ENCODE measurements at regions of chr11 and their contacts with region 1.

Region 1: DNA sequence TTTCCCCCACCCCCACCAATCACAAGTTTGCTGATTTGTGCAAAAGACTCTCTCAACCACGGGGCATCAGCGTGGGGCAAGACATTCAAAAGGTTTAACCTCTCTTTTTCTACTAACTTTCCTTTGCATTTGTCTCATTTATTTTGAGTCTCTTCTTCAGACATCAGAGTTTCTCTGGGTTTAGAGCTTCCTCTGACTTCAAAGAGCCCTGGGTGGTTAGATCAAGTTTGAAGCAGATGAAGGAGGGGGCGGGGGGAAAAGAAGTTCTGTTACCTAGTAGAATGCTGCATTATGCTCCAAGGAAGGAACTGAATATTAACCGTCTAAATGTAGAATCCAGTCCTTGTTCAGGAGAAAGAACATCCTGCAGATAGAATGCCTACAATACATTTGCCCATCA is 24.5 kb downstream of the GAS2 start:
- DNase-seq: no peak
- ATAC-seq: peak; percentile 32
- H3K4me3 ChIP-seq: no peak overlapping the region
- H3K27ac ChIP-seq: no peak overlapping the region
- H3K4me1 ChIP-seq: no peaks in the 10 kb centered on the region
- H3K27me3 ChIP-seq: no peaks in the 10 kb centered on the region
- CTCF ChIP-seq: no peak
- EP300 ChIP-seq: no peak
- POLR2A ChIP-seq: no peak
- RAD21 ChIP-seq: no peak

Region 2: DNA sequence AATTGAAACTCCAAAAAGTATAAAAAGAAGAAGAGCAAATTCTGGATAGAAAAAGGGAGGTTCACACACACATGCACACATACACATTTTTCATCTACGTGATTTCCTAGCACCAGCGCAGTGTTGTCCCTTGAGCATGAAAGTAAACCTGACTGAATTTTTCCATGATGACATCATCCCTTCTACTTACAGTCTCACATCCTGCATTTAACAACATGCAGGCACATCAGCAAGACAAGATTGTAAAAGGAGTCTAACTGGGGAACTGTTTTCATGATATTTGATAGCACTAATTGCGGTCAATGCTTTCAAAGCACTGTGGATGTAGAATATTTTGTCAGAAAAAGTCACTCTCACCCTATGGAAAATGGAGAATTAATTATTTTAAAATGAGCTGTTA is 12.2 kb after region 1 on chr11:
- CTCF ChIA-PET with region 1: interaction called, 4 read pairs
- POLR2A ChIA-PET with region 1: interaction called, 43 read pairs
- RAD21 ChIA-PET with region 1: interaction called, 13 read pairs
- SMC1A ChIA-PET with region 1: interaction called, 85 read pairs
- in situ Hi-C with region 1: no loop called
- intact Hi-C with region 1: no loop called
- DNase-seq: peak; percentile 21
- ATAC-seq: peak; percentile 76
- H3K4me3 ChIP-seq: no peak overlapping the region
- H3K27ac ChIP-seq: no peak overlapping the region
- H3K4me1 ChIP-seq: no peaks in the 10 kb centered on the region
- H3K27me3 ChIP-seq: no peaks in the 10 kb centered on the region
- CTCF ChIP-seq: no peak
- EP300 ChIP-seq: peak in 1 of 2 experiments; percentile 43; a peak in 1 of 4 replicates
- POLR2A ChIP-seq: no peak
- RAD21 ChIP-seq: no peak

Region 3: DNA sequence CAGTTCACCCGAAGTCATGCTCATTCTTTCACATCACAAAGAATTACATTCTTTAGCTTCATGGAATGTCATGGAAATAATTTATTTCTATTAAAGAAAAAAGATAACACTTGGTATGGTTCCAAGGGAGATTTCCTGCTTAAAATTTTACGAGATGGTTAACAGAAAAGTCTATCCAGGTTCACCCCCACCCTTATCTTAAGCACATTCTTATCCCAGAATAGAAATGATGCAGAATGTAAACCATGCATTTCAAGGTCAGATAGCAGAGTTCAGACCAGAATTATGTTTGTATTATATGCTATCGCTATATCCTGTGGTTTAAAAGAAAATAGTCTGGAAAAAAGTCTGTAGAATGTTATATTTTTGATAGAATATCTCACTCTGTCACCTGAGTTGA is 34.2 kb after region 1 on chr11:
- CTCF ChIA-PET with region 1: interaction called, 4 read pairs
- POLR2A ChIA-PET with region 1: interaction called, 7 read pairs
- RAD21 ChIA-PET with region 1: interaction called, 12 read pairs
- SMC1A ChIA-PET with region 1: interaction called, 18 read pairs
- in situ Hi-C with region 1: no loop called
- intact Hi-C with region 1: no loop called
- DNase-seq: no peak
- ATAC-seq: no peak
- H3K4me3 ChIP-seq: no peak overlapping the region
- H3K27ac ChIP-seq: no peak overlapping the region
- H3K4me1 ChIP-seq: no peaks in the 10 kb centered on the region
- H3K27me3 ChIP-seq: no peaks in the 10 kb centered on the region
- CTCF ChIP-seq: no peak
- EP300 ChIP-seq: no peak
- POLR2A ChIP-seq: no peak
- RAD21 ChIP-seq: no peak

Region 4: GRCh38 chr11:22898036-22898435 is 207.2 kb after region 1 on chr11:
- CTCF ChIA-PET with region 1: no interaction called
- POLR2A ChIA-PET with region 1: no interaction called
- RAD21 ChIA-PET with region 1: no interaction called
- SMC1A ChIA-PET with region 1: no interaction called
- in situ Hi-C with region 1: no loop called
- intact Hi-C with region 1: no loop called
- DNase-seq: no peak
- ATAC-seq: no peak
- H3K4me3 ChIP-seq: no peak overlapping the region
- H3K27ac ChIP-seq: no peak overlapping the region
- H3K4me1 ChIP-seq: no peaks in the 10 kb centered on the region
- H3K27me3 ChIP-seq: no peaks in the 10 kb centered on the region
- CTCF ChIP-seq: no peak
- EP300 ChIP-seq: no peak
- POLR2A ChIP-seq: no peak
- RAD21 ChIP-seq: no peak

Measured in GM12878 (cell line).